H1 (cell line): ENCODE measurements at regions of chr6 and their contacts with region 1.

Region 1: DNA sequence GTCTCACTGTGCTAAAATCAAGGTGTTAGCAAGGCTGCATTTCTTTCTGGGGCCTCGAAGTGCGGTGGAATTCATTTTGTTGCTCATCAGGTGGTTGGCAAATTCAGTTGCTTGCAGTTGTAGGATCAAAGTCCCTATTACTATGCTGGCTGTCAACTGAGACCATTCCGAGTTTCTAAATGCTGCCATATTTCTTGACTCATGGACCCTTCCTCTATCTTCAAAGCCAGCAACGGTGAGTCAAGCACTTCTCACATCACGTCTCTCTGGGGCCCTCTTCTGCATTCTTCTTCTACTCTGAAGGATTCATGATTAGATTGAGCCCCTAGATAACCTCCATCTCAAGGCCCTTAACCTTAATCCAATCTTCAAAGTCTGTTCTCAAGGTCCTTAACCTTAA is 619.7 kb downstream of the HACE1 start:
- DNase-seq: no peak
- H3K4me3 ChIP-seq: no peak overlapping the region
- H3K27ac ChIP-seq: no peak overlapping the region
- H3K4me1 ChIP-seq: no peaks in the 10 kb centered on the region
- H3K27me3 ChIP-seq: no peaks in the 10 kb centered on the region
- CTCF ChIP-seq: no peak
- EP300 ChIP-seq: no peak
- POLR2A ChIP-seq: no peak
- RAD21 ChIP-seq: no peak

Region 2: GRCh38 chr6:104134876-104135275 is 105.1 kb before region 1 on chr6:
- CTCF ChIA-PET with region 1: no interaction called
- POLR2A ChIA-PET with region 1: no interaction called
- DNase-seq: no peak
- H3K4me3 ChIP-seq: no peak overlapping the region
- H3K27ac ChIP-seq: no peak overlapping the region
- H3K4me1 ChIP-seq: no peaks in the 10 kb centered on the region
- H3K27me3 ChIP-seq: no peaks in the 10 kb centered on the region
- CTCF ChIP-seq: no peak
- EP300 ChIP-seq: no peak
- POLR2A ChIP-seq: no peak
- RAD21 ChIP-seq: no peak

Region 3: DNA sequence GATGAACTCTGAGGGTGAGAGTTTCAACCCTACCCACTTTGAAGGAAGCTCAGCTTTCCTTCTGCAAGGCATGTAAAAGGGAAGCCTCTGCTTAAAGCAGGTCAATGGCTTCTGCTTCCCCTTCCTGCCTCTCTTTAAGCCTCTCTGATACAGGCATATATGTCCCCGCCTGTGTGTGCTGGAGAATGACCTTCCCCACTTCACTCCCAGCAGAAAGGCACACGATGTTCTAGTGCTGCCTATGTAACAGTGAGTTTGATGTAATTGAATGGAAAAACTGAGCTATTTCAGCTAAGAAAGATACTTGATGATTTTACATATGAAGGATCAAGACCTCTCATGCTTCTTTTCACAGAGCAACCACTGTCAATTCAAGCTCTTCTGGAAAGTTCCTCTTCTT is 12.5 kb before region 1 on chr6:
- CTCF ChIA-PET with region 1: interaction called, 12 read pairs
- POLR2A ChIA-PET with region 1: no interaction called
- DNase-seq: no peak
- H3K4me3 ChIP-seq: no peak overlapping the region
- H3K27ac ChIP-seq: no peak overlapping the region
- H3K4me1 ChIP-seq: no peaks in the 10 kb centered on the region
- H3K27me3 ChIP-seq: no peaks in the 10 kb centered on the region
- CTCF ChIP-seq: no peak
- EP300 ChIP-seq: no peak
- POLR2A ChIP-seq: no peak
- RAD21 ChIP-seq: no peak